ENCODE measurements at regions of chr22 and their contacts with region 1.

Region 1: DNA sequence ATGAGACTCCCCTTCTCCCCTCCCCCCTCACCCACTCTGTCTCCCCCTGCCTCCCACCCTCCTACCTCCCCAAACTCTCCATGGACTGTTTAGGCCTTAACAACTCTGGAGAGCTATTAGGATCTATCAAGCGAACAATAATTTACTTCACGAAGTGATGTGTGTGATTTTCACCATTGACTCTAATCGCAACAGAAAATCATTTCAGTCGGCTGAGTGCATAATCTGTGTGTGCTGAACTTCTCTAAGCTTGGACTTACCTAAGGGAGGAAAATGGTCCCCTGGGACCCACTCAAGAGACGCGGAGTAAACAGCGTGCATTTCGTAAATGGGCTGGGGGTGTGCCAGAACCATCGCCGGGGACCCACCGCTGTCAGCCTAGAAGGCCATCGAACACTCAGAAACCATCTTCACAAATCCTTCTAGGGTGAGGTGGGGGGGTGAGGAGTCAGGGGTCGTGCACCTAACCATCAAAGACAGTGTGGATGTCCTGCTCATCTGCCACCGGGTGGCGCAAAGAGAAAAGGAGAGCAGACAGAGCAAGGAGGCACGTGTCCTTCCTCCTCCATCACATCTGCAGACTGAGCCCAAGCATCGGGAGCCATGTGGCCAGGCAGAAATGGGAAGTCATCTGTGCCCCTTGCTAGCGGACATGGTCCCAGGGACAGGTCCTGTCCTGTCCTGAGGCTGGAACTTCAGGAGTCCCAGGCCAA is 62.1 kb upstream of the NUP50 start:
- DNase-seq: no peak
- H3K4me3 ChIP-seq: no peak overlapping the region
- H3K27ac ChIP-seq: no peak overlapping the region
- H3K27me3 ChIP-seq: peaks cover 18% of the 10 kb centered on the region
- CTCF ChIP-seq: peak; percentile 78

Region 2: DNA sequence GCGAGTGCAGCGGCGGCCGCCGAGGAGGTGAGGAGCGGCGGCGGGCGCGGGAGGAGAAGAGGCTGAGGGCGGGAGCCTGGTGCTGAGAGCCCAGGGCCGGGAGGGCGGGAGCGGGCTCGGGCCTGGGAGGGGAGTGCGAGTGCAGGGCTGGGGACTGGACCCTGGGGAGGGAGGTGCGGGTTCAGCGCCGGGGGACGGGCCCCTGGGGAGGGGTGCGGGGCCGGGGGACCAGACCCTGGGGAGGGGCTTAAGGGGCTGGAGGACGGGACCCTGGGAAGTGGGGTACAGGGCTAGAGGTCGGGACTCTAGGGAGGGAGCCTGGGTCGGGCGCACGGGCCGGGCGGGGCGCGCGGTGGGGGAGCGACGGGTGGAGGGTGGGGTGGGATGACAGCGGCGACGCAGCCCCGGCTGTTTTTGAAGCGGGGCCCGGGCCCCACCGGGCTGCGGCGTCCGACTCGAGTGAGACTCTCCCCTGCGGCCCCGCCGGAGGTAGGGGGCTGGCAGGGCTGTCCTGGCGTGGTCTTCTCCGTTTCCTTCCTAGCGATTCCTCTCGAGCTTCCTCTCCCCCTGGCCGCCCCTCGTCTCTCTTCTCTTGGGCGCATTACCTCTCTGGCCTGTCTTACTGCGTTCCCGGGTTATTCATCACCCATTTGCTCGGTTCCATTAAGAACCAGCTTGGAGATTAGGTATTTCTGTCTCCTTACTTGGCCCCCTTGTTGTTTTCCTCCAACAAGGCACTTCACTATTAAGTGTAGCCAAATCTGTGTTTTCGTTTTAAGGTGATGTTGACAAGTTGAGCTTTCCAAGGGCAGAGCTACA is 62.8 kb after region 1 on chr22:
- CTCF ChIA-PET with region 1: interaction called, 11 read pairs
- POLR2A ChIA-PET with region 1: interaction called, 3 read pairs
- DNase-seq: no peak
- H3K4me3 ChIP-seq: peak overlapping the region; percentile 74
- H3K27ac ChIP-seq: peak overlapping the region; percentile 39
- H3K27me3 ChIP-seq: no peaks in the 10 kb centered on the region
- CTCF ChIP-seq: no peak

Measured in AG04450 (cell line).